ENCODE measurements at regions of chr17 and their contacts with region 1.

Region 1: GRCh38 chr17:75667021-75667790 is at the starts of genes RECQL5 and SAP30BP:
- DNase-seq: peak; percentile 98 to 99 (median 98)
- H3K4me3 ChIP-seq: peak within 1 kb of the TSS; percentile 89 to 97 (median 92)
- H3K4me3 Mint-ChIP-seq: peak within 1 kb of the TSS in 1 of 2 donors; percentile 60
- H3K27ac ChIP-seq: peak within 1 kb of the TSS; percentile 84 to 99
- H3K27ac Mint-ChIP-seq: peak within 1 kb of the TSS in 3 of 7 donors; percentile 63 to 84 (median 72)
- H3K4me1 ChIP-seq: peaks cover 17 to 22% of the 10 kb centered on the region in 2 donors
- H3K4me1 Mint-ChIP-seq: peaks cover 12% of the 10 kb centered on the region
- H3K27me3 ChIP-seq: no peaks in the 10 kb centered on the region
- H3K27me3 Mint-ChIP-seq: peaks cover 0 to 2% (median 0%) of the 10 kb centered on the region in 3 donors
- CTCF ChIP-seq: no peak
- polyA plus RNA-seq, gene RECQL5: 3.1 to 27.7 (median 4.4) TPM
- polyA plus RNA-seq, gene SAP30BP: 43.8 to 130 (median 61.6) TPM

Region 2: DNA sequence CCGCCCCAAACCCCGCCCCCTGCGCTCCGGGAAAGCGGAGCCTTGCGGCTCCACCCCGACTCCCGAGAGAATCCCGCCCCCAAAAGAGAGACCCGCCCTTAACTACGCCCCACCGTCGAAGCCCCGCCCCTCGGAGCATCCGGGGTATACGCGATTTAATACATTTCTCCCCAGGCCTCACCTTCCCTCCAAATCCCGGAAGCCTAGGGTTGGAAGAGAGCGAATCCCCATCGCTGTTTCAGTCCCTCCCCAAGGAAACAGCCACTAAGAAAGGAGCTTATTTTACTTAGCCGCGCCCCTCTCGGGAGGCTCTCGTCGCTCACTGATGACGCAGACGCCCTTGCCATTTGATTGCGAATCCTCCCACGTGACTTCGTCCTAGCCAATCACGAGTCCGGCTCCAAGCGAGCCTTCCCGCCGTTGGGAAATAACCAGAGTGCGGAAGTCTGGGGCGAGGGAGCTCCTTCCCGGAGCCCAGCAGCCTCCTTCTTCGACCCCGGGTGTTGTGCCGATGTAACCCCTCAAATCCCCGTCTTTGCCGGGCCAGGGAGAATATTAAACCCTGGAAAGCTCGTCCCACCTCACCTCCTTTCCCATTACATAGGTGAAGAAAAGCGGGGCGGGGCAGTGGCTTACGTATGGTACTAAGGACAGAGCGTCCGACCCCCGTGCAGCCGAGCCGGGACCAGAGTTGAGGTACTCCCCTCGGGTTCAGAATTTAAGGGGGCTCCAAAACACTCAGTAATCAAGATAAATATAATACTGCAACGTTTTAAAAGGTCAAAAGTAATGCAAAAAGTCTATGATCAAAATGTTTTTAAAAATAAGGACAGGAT is 794.0 kb before region 1 on chr17:
- intact Hi-C with region 1: loop called in 1 of 2 experiments (anchors 10 kb)
- DNase-seq: peak; percentile 99 to 100 (median 100)
- H3K4me3 ChIP-seq: peak overlapping the region; percentile 71 to 88 (median 85)
- H3K4me3 Mint-ChIP-seq: peak overlapping the region; percentile 81 to 88
- H3K27ac ChIP-seq: peak overlapping the region; percentile 70 to 95
- H3K27ac Mint-ChIP-seq: peak overlapping the region; percentile 86 to 98 (median 93)
- H3K4me1 ChIP-seq: peaks cover 18 to 22% of the 10 kb centered on the region in 2 donors
- H3K4me1 Mint-ChIP-seq: peaks cover 18% of the 10 kb centered on the region
- H3K27me3 ChIP-seq: no peaks in the 10 kb centered on the region
- H3K27me3 Mint-ChIP-seq: peaks cover 2 to 20% (median 5%) of the 10 kb centered on the region in 3 donors
- CTCF ChIP-seq: no peak

Region 3: GRCh38 chr17:75524953-75525719 is 142.1 kb before region 1 on chr17 and contains the start of gene LLGL2:
- intact Hi-C with region 1: no loop called
- DNase-seq: peak; percentile 48 to 60 (median 58)
- H3K4me3 ChIP-seq: peak within 1 kb of the TSS; percentile 63 to 88 (median 83)
- H3K4me3 Mint-ChIP-seq: peak within 1 kb of the TSS; percentile 67 to 86
- H3K27ac ChIP-seq: no peak within 1 kb of the TSS
- H3K27ac Mint-ChIP-seq: peak within 1 kb of the TSS in 1 of 7 donors; percentile 25
- H3K4me1 ChIP-seq: peaks cover 16 to 22% of the 10 kb centered on the region in 2 donors
- H3K4me1 Mint-ChIP-seq: peaks cover 17% of the 10 kb centered on the region
- H3K27me3 ChIP-seq: peaks cover 5 to 18% of the 10 kb centered on the region in 2 donors
- H3K27me3 Mint-ChIP-seq: peaks cover 14 to 25% (median 20%) of the 10 kb centered on the region in 3 donors
- CTCF ChIP-seq: peak; percentile 41
- polyA plus RNA-seq, gene LLGL2: 4.8 to 7.5 (median 5.5) TPM